ENCODE measurements at regions of chr6 and their contacts with region 1.

Region 1: GRCh38 chr6:166382933-166383801 is at the start of gene MPC1:
- DNase-seq: peak; percentile 96
- H3K4me3 Mint-ChIP-seq: peak within 1 kb of the TSS; percentile 87
- H3K27ac Mint-ChIP-seq: peak within 1 kb of the TSS; percentile 74
- H3K4me1 Mint-ChIP-seq: peaks cover 7% of the 10 kb centered on the region
- H3K27me3 Mint-ChIP-seq: no peaks in the 10 kb centered on the region
- total RNA-seq, gene MPC1: 22.5 to 22.9 TPM

Region 2: GRCh38 chr6:166167801-166168615 is 215.2 kb before region 1 on chr6 and contains the start of gene TBXT:
- CTCF ChIA-PET with region 1: no interaction called
- POLR2A ChIA-PET with region 1: no interaction called
- intact Hi-C with region 1: no loop called
- DNase-seq: peak; percentile 21
- H3K4me3 Mint-ChIP-seq: peak within 1 kb of the TSS; percentile 64
- H3K27ac Mint-ChIP-seq: no peak within 1 kb of the TSS
- H3K4me1 Mint-ChIP-seq: peaks cover 7% of the 10 kb centered on the region
- H3K27me3 Mint-ChIP-seq: peaks cover 54% of the 10 kb centered on the region
- total RNA-seq, gene TBXT: not detected

Region 3: DNA sequence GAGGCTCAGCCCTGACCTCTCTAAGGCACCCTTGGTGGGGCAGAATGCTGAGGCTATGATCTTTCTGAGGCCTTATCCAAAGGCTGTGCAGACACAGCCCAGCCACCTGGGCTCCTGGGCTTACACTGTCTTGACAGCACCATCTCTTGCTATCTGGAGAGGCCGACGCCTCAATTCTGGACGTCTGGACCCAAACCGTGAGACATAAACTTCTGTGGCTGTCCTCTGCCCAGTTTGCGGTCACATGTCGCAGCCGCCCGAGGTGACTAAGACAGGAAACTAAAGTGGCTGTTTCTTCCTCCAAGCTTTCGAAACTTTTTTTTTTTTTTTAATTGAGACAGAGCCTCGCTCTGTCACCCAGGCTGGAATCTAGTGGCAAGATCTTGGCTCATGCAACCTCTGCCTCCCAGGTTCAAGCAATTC is 124.3 kb before region 1 on chr6:
- CTCF ChIA-PET with region 1: interaction called, 3 read pairs
- POLR2A ChIA-PET with region 1: interaction called, 3 read pairs
- intact Hi-C with region 1: loop called (anchors 1 kb)
- DNase-seq: peak; percentile 68
- H3K4me3 Mint-ChIP-seq: peak overlapping the region; percentile 38
- H3K27ac Mint-ChIP-seq: peak overlapping the region; percentile 59
- H3K4me1 Mint-ChIP-seq: peaks cover 32% of the 10 kb centered on the region
- H3K27me3 Mint-ChIP-seq: peaks cover 18% of the 10 kb centered on the region

Region 4: GRCh38 chr6:166308033-166308768 is 75.0 kb before region 1 on chr6 and contains the start of gene PRR18:
- CTCF ChIA-PET with region 1: interaction called, 46 read pairs
- POLR2A ChIA-PET with region 1: no interaction called
- intact Hi-C with region 1: loop called (anchors 1 kb)
- DNase-seq: no peak
- H3K4me3 Mint-ChIP-seq: peak within 1 kb of the TSS; percentile 48
- H3K27ac Mint-ChIP-seq: no peak within 1 kb of the TSS
- H3K4me1 Mint-ChIP-seq: no peaks in the 10 kb centered on the region
- H3K27me3 Mint-ChIP-seq: peaks cover 38% of the 10 kb centered on the region
- total RNA-seq, gene PRR18: 0.17 TPM in 1 of 2 experiments, not detected in the other

Region 5: GRCh38 chr6:166342349-166343149 is 40.6 kb before region 1 on chr6 and contains the start of gene SFT2D1:
- CTCF ChIA-PET with region 1: interaction called, 9 read pairs
- POLR2A ChIA-PET with region 1: interaction called, 6 read pairs
- intact Hi-C with region 1: loop called (anchors 1 kb)
- DNase-seq: peak; percentile 85
- H3K4me3 Mint-ChIP-seq: peak within 1 kb of the TSS; percentile 83
- H3K27ac Mint-ChIP-seq: peak within 1 kb of the TSS; percentile 86
- H3K4me1 Mint-ChIP-seq: peaks cover 11% of the 10 kb centered on the region
- H3K27me3 Mint-ChIP-seq: no peaks in the 10 kb centered on the region
- total RNA-seq, gene SFT2D1: 57.2 to 59.5 TPM

Region 6: GRCh38 chr6:166411721-166412151 is 28.6 kb after region 1 on chr6:
- CTCF ChIA-PET with region 1: interaction called, 3 read pairs
- POLR2A ChIA-PET with region 1: no interaction called
- intact Hi-C with region 1: loop called (anchors 2 kb)
- DNase-seq: peak; percentile 46
- H3K4me3 Mint-ChIP-seq: peak overlapping the region; percentile 49
- H3K27ac Mint-ChIP-seq: no peak overlapping the region
- H3K4me1 Mint-ChIP-seq: peaks cover 61% of the 10 kb centered on the region
- H3K27me3 Mint-ChIP-seq: no peaks in the 10 kb centered on the region